H1 (cell line): ENCODE measurements at regions of chr2 and their contacts with region 1.

Region 1: DNA sequence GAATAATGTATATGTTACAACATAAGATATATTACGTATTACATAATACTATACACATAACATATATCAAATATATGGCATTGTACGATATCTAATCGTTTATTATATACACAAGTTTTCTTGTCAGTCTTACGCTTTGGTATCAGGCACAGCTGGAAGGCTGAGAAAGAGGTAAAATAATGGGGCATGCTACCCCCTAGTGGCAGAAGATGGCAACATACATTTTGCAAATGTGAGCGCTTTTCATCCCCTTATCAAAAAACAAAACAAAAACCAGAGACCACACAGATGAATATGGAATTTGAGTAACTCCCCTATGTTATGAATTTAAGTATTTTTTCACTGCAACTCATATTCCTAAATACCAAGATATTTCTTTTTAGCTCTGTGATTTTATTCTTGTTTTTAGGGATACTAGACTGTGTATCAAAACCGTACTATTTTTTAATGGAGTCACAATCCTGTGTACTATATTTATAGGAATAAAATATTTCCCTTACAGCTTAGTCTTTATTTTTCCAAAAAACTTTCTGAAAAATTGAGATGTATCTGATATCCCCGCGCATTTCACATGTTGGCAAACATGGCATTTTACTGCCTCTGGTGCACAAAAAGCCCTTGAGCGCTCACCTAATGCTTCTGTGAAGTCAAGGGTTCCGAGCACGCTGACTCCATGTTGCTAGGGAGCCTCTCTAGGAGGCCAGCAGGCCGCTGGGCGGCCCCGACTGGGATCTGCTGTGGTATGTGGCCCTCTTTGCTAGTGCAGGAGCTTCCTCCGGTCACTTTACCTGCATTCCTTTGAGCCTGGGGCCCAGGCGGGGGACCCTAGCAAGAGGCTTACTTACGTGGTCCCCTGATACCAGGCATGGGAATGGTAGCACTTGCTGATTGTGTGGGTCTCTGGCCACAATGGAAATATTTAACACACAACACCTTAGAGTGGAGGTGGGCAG is 62.5 kb downstream of the SLC4A3 start:
- DNase-seq: peak in 1 of 2 experiments; percentile 66
- H3K4me3 ChIP-seq: no peak overlapping the region; a peak in 1 of 8 replicates
- H3K27ac ChIP-seq: no peak overlapping the region
- H3K4me1 ChIP-seq: peaks cover 0 to 11% (median 2%) of the 10 kb centered on the region in 4 experiments; a peak in 6 of 7 replicates
- H3K27me3 ChIP-seq: no peaks in the 10 kb centered on the region
- CTCF ChIP-seq: peak in 2 of 3 experiments; percentile 69 to 82; a peak in 3 of 4 replicates
- EP300 ChIP-seq: no peak
- POLR2A ChIP-seq: no peak
- RAD21 ChIP-seq: peak; percentile 72 to 83

Region 2: GRCh38 chr2:219521066-219521880 is 168.7 kb before region 1 on chr2:
- CTCF ChIA-PET with region 1: interaction called, 11 read pairs
- POLR2A ChIA-PET with region 1: no interaction called
- DNase-seq: peak in 1 of 2 experiments; percentile 86
- H3K4me3 ChIP-seq: peak overlapping the region in 1 of 4 experiments; percentile 63; a peak in 1 of 8 replicates
- H3K27ac ChIP-seq: no peak overlapping the region
- H3K4me1 ChIP-seq: peaks cover 0 to 28% (median 19%) of the 10 kb centered on the region in 4 experiments; a peak in 6 of 7 replicates
- H3K27me3 ChIP-seq: peaks cover 0 to 14% (median 4%) of the 10 kb centered on the region in 4 experiments; a peak in 3 of 7 replicates
- CTCF ChIP-seq: peak in 2 of 3 experiments; percentile 92 to 94; a peak in 3 of 4 replicates
- EP300 ChIP-seq: 0 out of 3 replicates have a peak, but pooled peaks of 1 of the 2 experiments have one; percentile 54
- POLR2A ChIP-seq: no peak
- RAD21 ChIP-seq: peak; percentile 64 to 79

Region 3: GRCh38 chr2:219619235-219619634 is 70.7 kb before region 1 on chr2:
- CTCF ChIA-PET with region 1: interaction called, 22 read pairs
- POLR2A ChIA-PET with region 1: no interaction called
- DNase-seq: no peak
- H3K4me3 ChIP-seq: no peak overlapping the region
- H3K27ac ChIP-seq: no peak overlapping the region
- H3K4me1 ChIP-seq: no peaks in the 10 kb centered on the region
- H3K27me3 ChIP-seq: no peaks in the 10 kb centered on the region
- CTCF ChIP-seq: peak; percentile 58 to 80 (median 63)
- EP300 ChIP-seq: no peak
- POLR2A ChIP-seq: no peak
- RAD21 ChIP-seq: peak; percentile 75 to 84

Region 4: DNA sequence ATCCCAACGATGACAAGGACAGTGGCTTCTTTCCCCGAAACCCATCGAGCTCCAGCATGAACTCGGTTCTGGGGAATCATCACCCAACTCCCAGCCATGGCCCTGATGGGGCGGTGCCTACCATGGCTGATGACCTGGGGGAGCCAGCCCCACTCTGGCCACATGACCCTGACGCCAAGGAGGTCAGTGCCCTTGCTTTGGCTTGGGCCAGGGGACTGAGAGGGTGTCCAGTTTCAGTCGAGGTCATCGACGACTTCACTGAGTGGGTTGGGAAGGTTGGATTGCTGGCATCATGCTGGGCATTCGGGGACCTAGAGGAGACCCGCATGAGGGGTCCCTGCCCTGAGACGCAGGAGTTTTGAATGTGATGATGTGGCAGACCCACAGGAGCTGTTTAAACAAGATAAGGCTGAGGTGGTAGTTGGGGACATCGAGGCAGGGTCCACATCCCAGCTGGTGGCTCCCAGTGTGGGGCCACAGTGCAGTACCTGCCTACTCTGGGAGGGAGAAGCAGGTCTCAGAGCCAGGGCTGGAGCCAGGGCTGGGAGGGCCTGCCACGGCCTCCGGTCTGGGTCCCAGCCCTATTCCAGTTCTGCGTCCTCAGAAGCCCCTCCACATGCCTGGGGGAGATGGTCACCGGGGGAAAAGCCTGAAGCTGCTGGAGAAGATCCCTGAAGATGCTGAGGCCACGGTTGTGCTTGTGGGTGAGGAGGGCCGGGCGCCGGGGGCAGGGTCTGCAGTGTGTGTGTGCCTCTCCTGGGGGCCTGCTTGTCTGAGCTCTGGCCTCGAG is 56.5 kb before region 1 on chr2:
- CTCF ChIA-PET with region 1: interaction called, 175 read pairs
- POLR2A ChIA-PET with region 1: interaction called, 4 read pairs
- DNase-seq: no peak
- H3K4me3 ChIP-seq: no peak overlapping the region
- H3K27ac ChIP-seq: no peak overlapping the region
- H3K4me1 ChIP-seq: peaks cover 0 to 4% (median under 1%) of the 10 kb centered on the region in 4 experiments; a peak in 3 of 7 replicates
- H3K27me3 ChIP-seq: no peaks in the 10 kb centered on the region
- CTCF ChIP-seq: no peak
- EP300 ChIP-seq: no peak
- POLR2A ChIP-seq: no peak
- RAD21 ChIP-seq: no peak

Region 5: GRCh38 chr2:219650426-219651248 is 39.3 kb before region 1 on chr2:
- CTCF ChIA-PET with region 1: interaction called, 175 read pairs
- POLR2A ChIA-PET with region 1: interaction called, 3 read pairs
- DNase-seq: no peak
- H3K4me3 ChIP-seq: no peak overlapping the region
- H3K27ac ChIP-seq: no peak overlapping the region
- H3K4me1 ChIP-seq: peaks cover 0 to 5% (median 2%) of the 10 kb centered on the region in 4 experiments; a peak in 3 of 7 replicates
- H3K27me3 ChIP-seq: no peaks in the 10 kb centered on the region
- CTCF ChIP-seq: peak in 2 of 3 experiments; percentile 1 to 9; a peak in 2 of 4 replicates
- EP300 ChIP-seq: no peak
- POLR2A ChIP-seq: no peak
- RAD21 ChIP-seq: no peak

Region 6: GRCh38 chr2:219675221-219675620 is 14.7 kb before region 1 on chr2:
- CTCF ChIA-PET with region 1: interaction called, 48 read pairs
- POLR2A ChIA-PET with region 1: interaction called, 8 read pairs
- DNase-seq: no peak
- H3K4me3 ChIP-seq: no peak overlapping the region
- H3K27ac ChIP-seq: no peak overlapping the region
- H3K4me1 ChIP-seq: peaks cover 2 to 11% (median 6%) of the 10 kb centered on the region in 4 experiments; a peak in 5 of 7 replicates
- H3K27me3 ChIP-seq: no peaks in the 10 kb centered on the region
- CTCF ChIP-seq: no peak
- EP300 ChIP-seq: no peak
- POLR2A ChIP-seq: no peak
- RAD21 ChIP-seq: no peak

Region 7: DNA sequence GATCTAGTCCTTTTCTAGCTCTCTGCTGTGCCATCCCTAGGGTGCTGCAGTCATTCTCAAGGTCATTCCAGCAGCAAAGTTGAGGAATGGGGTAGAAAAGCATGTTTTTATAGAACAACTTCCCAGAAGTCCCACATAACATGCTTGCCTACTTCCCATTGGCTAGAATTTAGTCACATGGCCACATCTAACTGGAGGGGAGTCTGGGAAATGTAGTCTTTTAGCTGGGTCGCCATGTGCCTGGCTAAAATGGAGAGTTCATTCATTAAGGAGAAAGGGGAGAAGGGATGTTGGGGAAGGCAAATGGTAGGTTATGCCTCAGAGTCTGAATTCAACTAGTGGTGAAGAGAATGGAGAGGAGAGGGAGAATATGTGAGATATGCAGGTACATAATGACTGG is 23.2 kb after region 1 on chr2:
- CTCF ChIA-PET with region 1: interaction called, 10 read pairs
- POLR2A ChIA-PET with region 1: interaction called, 4 read pairs
- DNase-seq: no peak
- H3K4me3 ChIP-seq: no peak overlapping the region
- H3K27ac ChIP-seq: no peak overlapping the region
- H3K4me1 ChIP-seq: peaks cover 0 to 1% (median 0%) of the 10 kb centered on the region in 4 experiments; a peak in 1 of 7 replicates
- H3K27me3 ChIP-seq: no peaks in the 10 kb centered on the region
- CTCF ChIP-seq: no peak
- EP300 ChIP-seq: no peak
- POLR2A ChIP-seq: no peak
- RAD21 ChIP-seq: no peak

Region 8: DNA sequence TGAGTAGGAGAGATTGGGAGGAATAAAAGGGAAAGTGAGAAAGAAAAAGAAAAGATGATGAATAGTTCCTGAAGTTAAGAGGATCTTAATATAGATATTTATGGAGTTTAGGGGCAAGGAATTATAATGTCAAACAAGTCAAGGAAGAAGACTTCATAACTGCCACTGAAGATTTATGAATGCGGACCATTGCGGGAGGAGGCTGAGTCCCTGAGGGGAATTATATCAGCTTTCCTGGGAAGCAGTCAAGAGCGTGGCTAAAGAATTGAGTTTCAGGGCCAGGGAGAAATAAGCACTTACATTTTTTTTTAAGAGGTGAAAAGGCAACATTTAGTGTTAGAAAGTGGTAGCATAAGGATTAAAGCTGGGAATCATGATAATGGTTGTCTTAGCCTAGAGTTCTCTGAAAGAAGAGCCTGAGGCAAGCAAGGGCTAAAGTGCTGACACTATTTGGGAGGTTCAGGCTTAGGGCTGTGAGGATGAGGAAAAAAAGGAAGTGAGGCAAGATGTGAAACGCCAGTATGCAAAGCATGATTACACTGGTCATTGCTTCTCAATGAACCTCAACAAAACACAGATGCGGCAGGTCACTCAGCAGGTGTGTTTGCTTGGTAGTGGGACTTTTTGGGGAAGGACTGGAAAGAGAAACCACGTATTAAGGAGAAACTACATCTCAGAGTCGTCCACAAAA is 154.6 kb after region 1 on chr2:
- CTCF ChIA-PET with region 1: no interaction called
- POLR2A ChIA-PET with region 1: no interaction called
- DNase-seq: no peak
- H3K4me3 ChIP-seq: no peak overlapping the region
- H3K27ac ChIP-seq: no peak overlapping the region
- H3K4me1 ChIP-seq: peaks cover 0 to 2% (median 0%) of the 10 kb centered on the region in 4 experiments; a peak in 1 of 7 replicates
- H3K27me3 ChIP-seq: no peaks in the 10 kb centered on the region
- CTCF ChIP-seq: no peak
- EP300 ChIP-seq: no peak
- POLR2A ChIP-seq: no peak
- RAD21 ChIP-seq: no peak

Region 9: DNA sequence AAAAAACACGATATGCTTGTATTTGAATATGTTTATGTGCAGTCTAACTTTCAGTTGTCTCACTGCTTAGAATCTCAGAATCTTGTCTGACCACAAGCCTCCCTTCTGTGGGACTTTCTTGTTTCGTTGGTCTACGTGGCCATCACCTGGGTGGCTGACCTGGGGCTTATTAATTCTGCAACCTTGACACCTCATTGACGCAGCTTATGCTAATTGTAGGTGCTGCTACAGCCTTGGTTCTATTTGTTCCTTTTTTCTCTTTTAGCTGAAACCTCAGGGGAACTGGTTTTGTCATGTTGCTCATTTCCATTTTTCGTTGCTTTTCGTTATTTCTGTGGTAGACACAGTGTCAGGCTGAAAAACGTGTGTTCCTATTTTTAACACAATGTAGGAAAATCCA is 211.2 kb after region 1 on chr2:
- CTCF ChIA-PET with region 1: no interaction called
- POLR2A ChIA-PET with region 1: no interaction called
- DNase-seq: no peak
- H3K4me3 ChIP-seq: no peak overlapping the region
- H3K27ac ChIP-seq: no peak overlapping the region
- H3K4me1 ChIP-seq: peaks cover 0 to 6% (median 3%) of the 10 kb centered on the region in 4 experiments; a peak in 2 of 7 replicates
- H3K27me3 ChIP-seq: no peaks in the 10 kb centered on the region
- CTCF ChIP-seq: no peak
- EP300 ChIP-seq: no peak
- POLR2A ChIP-seq: no peak
- RAD21 ChIP-seq: no peak